B cell (primary cell): ENCODE measurements at regions of chr10 and their contacts with region 1.

Region 1: DNA sequence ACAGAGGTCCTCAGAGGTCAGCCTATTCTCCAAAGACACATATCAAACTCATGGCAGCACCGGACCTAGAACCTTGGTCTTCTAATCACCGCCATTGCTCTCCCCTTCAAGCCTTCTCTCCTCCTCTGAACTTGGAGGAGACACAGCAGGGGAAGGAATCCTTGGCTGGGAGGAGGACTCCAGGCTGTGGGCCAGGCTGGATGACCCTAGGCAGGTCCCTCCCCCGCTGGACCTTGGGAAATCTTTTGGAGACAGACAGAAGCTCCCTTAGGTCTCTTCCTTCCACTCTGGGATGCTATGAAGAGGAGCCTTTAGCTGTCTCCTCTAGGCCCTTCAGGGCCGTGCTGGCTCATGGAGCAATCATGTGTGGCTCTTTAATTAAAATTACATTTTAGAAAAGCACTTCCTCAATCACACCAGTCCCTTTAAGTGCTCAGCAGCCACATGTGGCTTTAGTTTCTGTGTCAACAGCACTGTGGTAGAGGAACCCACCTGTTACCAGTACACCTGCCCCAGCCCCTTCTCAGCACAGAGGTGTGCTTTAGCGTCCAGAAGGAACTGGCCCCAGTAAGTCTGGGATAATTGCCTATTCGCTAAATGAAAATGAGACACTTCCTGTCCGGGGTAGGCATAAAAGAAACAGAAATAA is 238.2 kb downstream of the CELF2 start:
- DNase-seq: peak; percentile 56
- ATAC-seq: peak; percentile 56
- H3K4me3 ChIP-seq: no peak overlapping the region
- H3K4me3 Mint-ChIP-seq: peak overlapping the region; percentile 54
- H3K27ac ChIP-seq: peak overlapping the region; percentile 48 to 70
- H3K27ac Mint-ChIP-seq: peak overlapping the region; percentile 87
- H3K4me1 ChIP-seq: peaks cover 51 to 72% of the 10 kb centered on the region in 2 donors
- H3K4me1 Mint-ChIP-seq: peaks cover 70% of the 10 kb centered on the region
- H3K27me3 ChIP-seq: no peaks in the 10 kb centered on the region
- H3K27me3 Mint-ChIP-seq: no peaks in the 10 kb centered on the region
- CTCF ChIP-seq: no peak

Region 2: GRCh38 chr10:11017570-11018431 is 238.1 kb before region 1 on chr10 and contains the start of gene CELF2:
- CTCF ChIA-PET with region 1: no interaction called
- POLR2A ChIA-PET with region 1: no interaction called
- intact Hi-C with region 1: loop called (anchors 10 kb)
- DNase-seq: peak; percentile 67
- ATAC-seq: peak; percentile 79
- H3K4me3 ChIP-seq: peak within 1 kb of the TSS; percentile 18 to 58 (median 49)
- H3K4me3 Mint-ChIP-seq: peak within 1 kb of the TSS; percentile 85
- H3K27ac ChIP-seq: no peak within 1 kb of the TSS
- H3K27ac Mint-ChIP-seq: no peak within 1 kb of the TSS
- H3K4me1 ChIP-seq: peaks cover 8 to 16% of the 10 kb centered on the region in 2 donors
- H3K4me1 Mint-ChIP-seq: peaks cover 18% of the 10 kb centered on the region
- H3K27me3 ChIP-seq: peaks cover 0 to 66% (median 40%) of the 10 kb centered on the region in 4 experiments
- H3K27me3 Mint-ChIP-seq: peaks cover 74% of the 10 kb centered on the region
- CTCF ChIP-seq: no peak
- total RNA-seq, gene CELF2: 112 and 114 TPM in 2 replicates

Region 3: GRCh38 chr10:11242443-11243387 is 13.2 kb before region 1 on chr10:
- CTCF ChIA-PET with region 1: interaction called, 6 read pairs
- POLR2A ChIA-PET with region 1: interaction called, 9 read pairs
- intact Hi-C with region 1: loop called (anchors 1 kb)
- DNase-seq: peak; percentile 75
- ATAC-seq: peak; percentile 61
- H3K4me3 ChIP-seq: peak overlapping the region in 4 of 5 experiments; percentile 28 to 58 (median 40)
- H3K4me3 Mint-ChIP-seq: peak overlapping the region; percentile 91
- H3K27ac ChIP-seq: peak overlapping the region; percentile 66 to 80
- H3K27ac Mint-ChIP-seq: peak overlapping the region; percentile 97
- H3K4me1 ChIP-seq: peaks cover 82 to 85% of the 10 kb centered on the region in 2 donors
- H3K4me1 Mint-ChIP-seq: peaks cover 52% of the 10 kb centered on the region
- H3K27me3 ChIP-seq: no peaks in the 10 kb centered on the region
- H3K27me3 Mint-ChIP-seq: no peaks in the 10 kb centered on the region
- CTCF ChIP-seq: no peak